ENCODE measurements at regions of chr4 and their contacts with region 1.

Region 1: DNA sequence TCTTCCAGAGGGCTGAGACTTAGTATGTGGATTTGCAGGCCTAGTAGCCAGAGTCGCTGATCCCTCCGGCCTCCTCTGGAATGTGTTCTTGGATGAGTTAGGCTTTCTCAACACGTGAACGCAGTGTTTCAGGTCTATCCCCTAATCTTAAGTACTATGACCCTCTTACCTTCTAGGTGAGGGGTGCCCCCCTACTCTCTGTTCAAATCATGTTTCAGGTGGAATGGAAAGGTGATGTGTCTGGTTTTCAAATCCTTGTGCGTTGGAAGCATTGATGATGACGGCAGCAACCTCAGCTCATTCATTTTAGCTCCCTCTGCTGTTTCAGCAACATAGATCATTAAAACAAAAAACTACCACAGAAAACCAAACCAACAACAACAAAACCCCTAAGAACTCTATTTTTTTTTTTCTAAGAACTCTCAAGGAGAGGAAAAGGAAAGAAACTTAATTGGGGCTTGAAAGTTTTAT is 56.4 kb downstream of the RWDD4 start:
- DNase-seq: peak; percentile 33
- ATAC-seq: peak; percentile 49; the same call in 1 of the 2 replicates
- H3K4me3 ChIP-seq: no peak overlapping the region
- H3K27ac ChIP-seq: no peak overlapping the region
- H3K4me1 ChIP-seq: no peaks in the 10 kb centered on the region
- H3K27me3 ChIP-seq: no peaks in the 10 kb centered on the region
- CTCF ChIP-seq: peak; percentile 44
- POLR2A ChIP-seq: no peak
- RAD21 ChIP-seq: peak; percentile 41

Region 2: DNA sequence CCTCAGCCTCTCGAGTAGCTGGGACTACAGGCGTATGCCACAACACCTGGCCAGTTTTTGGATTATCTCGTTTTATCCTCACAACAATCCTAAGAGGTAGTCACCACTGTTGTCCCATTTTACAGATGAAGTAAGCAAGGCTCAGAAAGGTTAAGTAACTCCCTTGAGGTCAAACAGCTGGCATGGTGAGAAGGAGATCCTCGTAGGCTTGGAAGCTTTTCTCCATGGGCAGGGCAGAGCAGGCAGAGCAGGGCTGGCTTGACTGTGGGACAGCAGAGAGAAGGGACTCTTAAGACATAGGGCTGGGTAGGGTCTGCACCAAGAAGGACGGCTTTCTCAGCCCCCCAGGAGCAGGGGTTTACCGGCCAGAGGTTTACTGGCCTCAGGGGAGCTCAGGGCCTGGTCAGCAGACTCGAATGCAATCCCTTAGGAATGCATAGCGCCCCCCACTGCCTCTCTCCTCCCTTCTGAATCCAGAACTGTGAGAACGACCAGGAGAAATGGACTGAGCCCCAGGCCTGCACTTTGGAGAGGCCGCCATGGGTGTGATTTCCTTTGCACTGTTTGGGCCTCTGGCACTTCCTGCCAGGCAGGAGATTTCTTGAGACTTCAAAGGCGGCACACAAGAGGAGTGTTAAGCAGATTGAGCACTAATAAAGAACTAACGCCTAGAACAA is 172.1 kb before region 1 on chr4:
- CTCF ChIA-PET with region 1: no interaction called
- POLR2A ChIA-PET with region 1: no interaction called
- dilution Hi-C with region 1: no loop called
- in situ Hi-C with region 1: no loop called
- intact Hi-C with region 1: no loop called
- DNase-seq: no peak
- ATAC-seq: peak; percentile 48
- H3K4me3 ChIP-seq: no peak overlapping the region
- H3K27ac ChIP-seq: no peak overlapping the region
- H3K4me1 ChIP-seq: no peaks in the 10 kb centered on the region
- H3K27me3 ChIP-seq: no peaks in the 10 kb centered on the region; the same call in 1 of the 2 replicates
- CTCF ChIP-seq: no peak
- POLR2A ChIP-seq: no peak
- RAD21 ChIP-seq: no peak

Region 3: GRCh38 chr4:183471946-183472708 is 130.5 kb before region 1 on chr4:
- CTCF ChIA-PET with region 1: interaction called, 4 read pairs
- POLR2A ChIA-PET with region 1: no interaction called
- dilution Hi-C with region 1: no loop called
- in situ Hi-C with region 1: loop called (anchors 10 kb)
- intact Hi-C with region 1: loop called (anchors 1 kb)
- DNase-seq: peak; percentile 66
- ATAC-seq: peak; percentile 87
- H3K4me3 ChIP-seq: no peak overlapping the region
- H3K27ac ChIP-seq: no peak overlapping the region
- H3K4me1 ChIP-seq: peaks cover 2% of the 10 kb centered on the region
- H3K27me3 ChIP-seq: no peaks in the 10 kb centered on the region
- CTCF ChIP-seq: peak; percentile 85
- POLR2A ChIP-seq: no peak
- RAD21 ChIP-seq: peak; percentile 84

Region 4: GRCh38 chr4:183522821-183523220 is 79.8 kb before region 1 on chr4:
- CTCF ChIA-PET with region 1: no interaction called
- POLR2A ChIA-PET with region 1: no interaction called
- dilution Hi-C with region 1: no loop called
- in situ Hi-C with region 1: no loop called
- intact Hi-C with region 1: no loop called
- DNase-seq: no peak
- ATAC-seq: no peak; the same call in 1 of the 2 replicates
- H3K4me3 ChIP-seq: no peak overlapping the region
- H3K27ac ChIP-seq: no peak overlapping the region
- H3K4me1 ChIP-seq: no peaks in the 10 kb centered on the region
- H3K27me3 ChIP-seq: peaks cover under 1% of the 10 kb centered on the region; the same call in 1 of the 2 replicates
- CTCF ChIP-seq: no peak
- POLR2A ChIP-seq: no peak
- RAD21 ChIP-seq: no peak

Region 5: GRCh38 chr4:183541010-183541751 is 61.4 kb before region 1 on chr4:
- CTCF ChIA-PET with region 1: interaction called, 10 read pairs
- POLR2A ChIA-PET with region 1: no interaction called
- dilution Hi-C with region 1: no loop called
- in situ Hi-C with region 1: no loop called
- intact Hi-C with region 1: no loop called
- DNase-seq: peak; percentile 49
- ATAC-seq: peak; percentile 84
- H3K4me3 ChIP-seq: no peak overlapping the region
- H3K27ac ChIP-seq: no peak overlapping the region; the same call in 1 of the 2 replicates
- H3K4me1 ChIP-seq: peaks cover 8% of the 10 kb centered on the region; the same call in 1 of the 2 replicates
- H3K27me3 ChIP-seq: no peaks in the 10 kb centered on the region
- CTCF ChIP-seq: no peak
- POLR2A ChIP-seq: no peak
- RAD21 ChIP-seq: no peak

Measured in IMR-90 (cell line).